ENCODE measurements at regions of chr17 and their contacts with region 1.

Region 1: GRCh38 chr17:76868176-76868668 is at the start of gene MGAT5B:
- DNase-seq: peak; percentile 85
- ATAC-seq: peak; percentile 92
- H3K4me3 ChIP-seq: peak within 1 kb of the TSS in 3 of 5 experiments; percentile 5 to 45 (median 20)
- H3K4me3 Mint-ChIP-seq: peak within 1 kb of the TSS; percentile 84
- H3K27ac ChIP-seq: no peak within 1 kb of the TSS
- H3K27ac Mint-ChIP-seq: peak within 1 kb of the TSS; percentile 6
- H3K4me1 ChIP-seq: peaks cover 12 to 17% of the 10 kb centered on the region in 2 donors
- H3K4me1 Mint-ChIP-seq: peaks cover 17% of the 10 kb centered on the region
- H3K27me3 ChIP-seq: peaks cover 0 to 43% (median 12%) of the 10 kb centered on the region in 4 experiments
- H3K27me3 Mint-ChIP-seq: peaks cover 38% of the 10 kb centered on the region
- CTCF ChIP-seq: peak; percentile 79
- total RNA-seq, gene MGAT5B: 37.8 and 41.4 TPM in 2 replicates

Region 2: GRCh38 chr17:76772842-76773525 is 95.2 kb before region 1 on chr17:
- CTCF ChIA-PET with region 1: no interaction called
- POLR2A ChIA-PET with region 1: no interaction called
- intact Hi-C with region 1: no loop called
- DNase-seq: no peak
- ATAC-seq: no peak
- H3K4me3 ChIP-seq: no peak overlapping the region
- H3K4me3 Mint-ChIP-seq: no peak overlapping the region
- H3K27ac ChIP-seq: no peak overlapping the region
- H3K27ac Mint-ChIP-seq: no peak overlapping the region
- H3K4me1 ChIP-seq: no peaks in the 10 kb centered on the region
- H3K4me1 Mint-ChIP-seq: peaks cover 4% of the 10 kb centered on the region
- H3K27me3 ChIP-seq: no peaks in the 10 kb centered on the region
- H3K27me3 Mint-ChIP-seq: no peaks in the 10 kb centered on the region
- CTCF ChIP-seq: no peak

Region 3: GRCh38 chr17:76935331-76935730 is 67.1 kb after region 1 on chr17:
- CTCF ChIA-PET with region 1: no interaction called
- POLR2A ChIA-PET with region 1: no interaction called
- intact Hi-C with region 1: no loop called
- DNase-seq: no peak
- ATAC-seq: no peak
- H3K4me3 ChIP-seq: no peak overlapping the region
- H3K4me3 Mint-ChIP-seq: no peak overlapping the region
- H3K27ac ChIP-seq: no peak overlapping the region
- H3K27ac Mint-ChIP-seq: no peak overlapping the region
- H3K4me1 ChIP-seq: no peaks in the 10 kb centered on the region
- H3K4me1 Mint-ChIP-seq: no peaks in the 10 kb centered on the region
- H3K27me3 ChIP-seq: peaks cover 0 to 3% (median 0%) of the 10 kb centered on the region in 4 experiments
- H3K27me3 Mint-ChIP-seq: peaks cover 19% of the 10 kb centered on the region
- CTCF ChIP-seq: no peak

Region 4: GRCh38 chr17:76957678-76958464 is 89.6 kb after region 1 on chr17:
- CTCF ChIA-PET with region 1: interaction called, 3 read pairs
- POLR2A ChIA-PET with region 1: no interaction called
- intact Hi-C with region 1: loop called (anchors 5 kb)
- DNase-seq: peak; percentile 82
- ATAC-seq: peak; percentile 83
- H3K4me3 ChIP-seq: peak overlapping the region in 4 of 5 experiments; percentile 16 to 46 (median 38)
- H3K4me3 Mint-ChIP-seq: peak overlapping the region; percentile 88
- H3K27ac ChIP-seq: peak overlapping the region in 1 of 2 donors; percentile 65
- H3K27ac Mint-ChIP-seq: peak overlapping the region; percentile 86
- H3K4me1 ChIP-seq: peaks cover 31 to 32% of the 10 kb centered on the region in 2 donors
- H3K4me1 Mint-ChIP-seq: peaks cover 37% of the 10 kb centered on the region
- H3K27me3 ChIP-seq: peaks cover 0 to 10% (median 4%) of the 10 kb centered on the region in 4 experiments
- H3K27me3 Mint-ChIP-seq: peaks cover 10% of the 10 kb centered on the region
- CTCF ChIP-seq: no peak

Region 5: DNA sequence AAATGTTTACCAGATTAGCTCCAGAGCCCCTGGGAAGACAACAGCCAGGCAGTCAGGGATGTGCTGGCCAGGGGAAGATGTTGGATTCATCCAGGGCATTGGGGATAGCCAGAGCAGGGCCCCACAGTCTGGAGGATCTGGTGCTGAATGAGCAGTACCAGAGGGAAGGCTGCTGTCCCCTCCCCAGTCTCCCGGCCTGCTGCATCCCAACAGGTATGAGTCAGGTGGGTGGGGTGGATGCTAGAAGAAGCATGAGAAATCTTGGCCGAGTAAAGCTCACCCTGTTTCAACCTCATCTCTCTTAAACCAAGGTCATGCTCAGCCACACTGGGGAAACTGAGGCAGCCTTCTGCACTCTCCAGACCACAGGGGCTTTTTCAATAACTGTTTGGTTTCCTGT is 200.7 kb after region 1 on chr17:
- CTCF ChIA-PET with region 1: interaction called, 426 read pairs
- POLR2A ChIA-PET with region 1: no interaction called
- intact Hi-C with region 1: loop called (anchors 1 kb)
- DNase-seq: no peak
- ATAC-seq: no peak
- H3K4me3 ChIP-seq: no peak overlapping the region
- H3K4me3 Mint-ChIP-seq: no peak overlapping the region
- H3K27ac ChIP-seq: no peak overlapping the region
- H3K27ac Mint-ChIP-seq: no peak overlapping the region
- H3K4me1 ChIP-seq: no peaks in the 10 kb centered on the region
- H3K4me1 Mint-ChIP-seq: peaks cover 2% of the 10 kb centered on the region
- H3K27me3 ChIP-seq: peaks cover 0 to 16% (median 3%) of the 10 kb centered on the region in 4 experiments
- H3K27me3 Mint-ChIP-seq: peaks cover 32% of the 10 kb centered on the region
- CTCF ChIP-seq: no peak

Region 6: GRCh38 chr17:77247048-77247541 is 378.9 kb after region 1 on chr17:
- CTCF ChIA-PET with region 1: interaction called, 8 read pairs
- POLR2A ChIA-PET with region 1: no interaction called
- intact Hi-C with region 1: loop called (anchors 1 kb)
- DNase-seq: peak; percentile 89
- ATAC-seq: peak; percentile 98
- H3K4me3 ChIP-seq: peak overlapping the region in 4 of 5 experiments; percentile 32 to 54 (median 48)
- H3K4me3 Mint-ChIP-seq: peak overlapping the region; percentile 71
- H3K27ac ChIP-seq: no peak overlapping the region
- H3K27ac Mint-ChIP-seq: no peak overlapping the region
- H3K4me1 ChIP-seq: peaks cover 9 to 10% of the 10 kb centered on the region in 2 donors
- H3K4me1 Mint-ChIP-seq: peaks cover 16% of the 10 kb centered on the region
- H3K27me3 ChIP-seq: peaks cover 0 to 20% (median 2%) of the 10 kb centered on the region in 4 experiments
- H3K27me3 Mint-ChIP-seq: peaks cover 41% of the 10 kb centered on the region
- CTCF ChIP-seq: peak; percentile 98